ENCODE measurements at regions of chr4 and their contacts with region 1.

Region 1: DNA sequence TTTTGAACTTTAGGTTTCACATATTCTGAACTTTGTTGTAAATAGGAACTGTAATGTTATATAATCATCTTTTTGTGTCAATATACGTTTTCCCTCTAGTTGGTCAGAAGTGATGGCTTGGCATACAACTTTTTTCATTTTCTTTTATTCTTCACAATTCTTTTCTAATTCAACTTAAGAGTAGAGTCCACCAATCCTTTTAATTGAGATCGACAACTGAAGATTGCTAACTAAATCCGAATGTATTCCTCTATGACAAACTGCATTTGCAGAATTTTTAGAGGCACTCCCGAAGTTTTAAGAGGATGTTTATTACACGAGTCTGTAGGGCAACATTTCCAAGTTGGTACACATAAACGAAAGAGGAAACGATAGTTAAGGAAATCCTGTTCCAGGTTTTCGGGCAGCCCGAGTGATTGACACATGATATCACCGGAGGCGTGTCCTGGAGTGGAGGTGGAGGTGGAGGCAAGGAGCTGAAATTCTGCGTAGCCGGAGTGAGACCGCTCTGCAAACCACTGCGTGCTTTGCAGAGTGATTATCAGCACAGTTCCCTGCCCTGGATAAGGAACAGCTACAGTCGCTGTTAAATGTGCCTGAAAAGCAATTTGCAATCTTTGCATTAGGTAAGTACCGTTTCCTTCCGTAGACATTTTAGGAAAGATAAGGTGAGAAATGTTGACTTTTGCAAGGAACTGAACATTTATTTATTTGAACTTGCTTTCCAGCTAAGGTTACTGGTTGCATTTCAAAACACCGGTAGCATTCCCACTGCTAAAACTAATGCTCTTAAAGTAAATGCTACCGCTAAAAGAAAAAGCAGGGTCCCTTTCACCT is at the start of gene SPRY1:
- DNase-seq: peak; percentile 90
- ATAC-seq: peak; percentile 63
- H3K4me3 Mint-ChIP-seq: peak within 1 kb of the TSS; percentile 81
- H3K27ac Mint-ChIP-seq: peak within 1 kb of the TSS; percentile 90
- H3K4me1 Mint-ChIP-seq: peaks cover 24% of the 10 kb centered on the region
- H3K27me3 Mint-ChIP-seq: peaks cover 5% of the 10 kb centered on the region
- total RNA-seq, gene SPRY1: 51.2 to 52.0 TPM

Region 2: GRCh38 chr4:122922877-122923511 is 473.5 kb before region 1 on chr4:
- CTCF ChIA-PET with region 1: no interaction called
- POLR2A ChIA-PET with region 1: no interaction called
- intact Hi-C with region 1: loop called in 1 of 2 experiments (anchors 5 kb)
- DNase-seq: peak; percentile 93
- ATAC-seq: peak; percentile 98
- H3K4me3 Mint-ChIP-seq: no peak overlapping the region
- H3K27ac Mint-ChIP-seq: peak overlapping the region; percentile 87
- H3K4me1 Mint-ChIP-seq: peaks cover 9% of the 10 kb centered on the region
- H3K27me3 Mint-ChIP-seq: no peaks in the 10 kb centered on the region

Region 3: GRCh38 chr4:123250843-123251242 is 145.7 kb before region 1 on chr4:
- CTCF ChIA-PET with region 1: no interaction called
- POLR2A ChIA-PET with region 1: no interaction called
- intact Hi-C with region 1: no loop called
- DNase-seq: no peak
- ATAC-seq: no peak
- H3K4me3 Mint-ChIP-seq: no peak overlapping the region
- H3K27ac Mint-ChIP-seq: no peak overlapping the region
- H3K4me1 Mint-ChIP-seq: no peaks in the 10 kb centered on the region
- H3K27me3 Mint-ChIP-seq: no peaks in the 10 kb centered on the region

Region 4: DNA sequence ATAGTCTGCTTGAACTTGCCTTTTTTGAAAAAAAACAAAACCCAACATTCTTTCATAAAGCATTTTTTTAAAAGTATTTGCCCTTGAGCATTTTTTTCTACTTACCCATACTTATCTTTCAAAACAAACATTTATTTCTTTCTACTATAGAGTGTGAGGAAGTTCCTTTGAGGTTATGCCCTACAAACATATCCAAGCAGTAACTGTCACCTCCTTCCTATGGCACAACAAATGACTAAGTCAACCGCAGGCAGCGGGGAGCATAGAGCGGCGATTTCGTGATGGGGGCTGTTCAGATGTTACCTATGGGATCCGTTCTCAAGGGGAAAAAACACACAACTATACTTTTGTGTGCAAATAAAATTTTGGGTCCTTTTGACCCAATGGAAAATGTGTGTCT is 19.5 kb after region 1 on chr4:
- CTCF ChIA-PET with region 1: interaction called, 12 read pairs
- POLR2A ChIA-PET with region 1: interaction called, 10 read pairs
- intact Hi-C with region 1: loop called (anchors 1 to 2 kb)
- DNase-seq: peak; percentile 72
- ATAC-seq: peak; percentile 64
- H3K4me3 Mint-ChIP-seq: no peak overlapping the region
- H3K27ac Mint-ChIP-seq: peak overlapping the region; percentile 60
- H3K4me1 Mint-ChIP-seq: peaks cover 72% of the 10 kb centered on the region
- H3K27me3 Mint-ChIP-seq: peaks cover 2% of the 10 kb centered on the region

Region 5: GRCh38 chr4:123477711-123478209 is 81.2 kb after region 1 on chr4:
- CTCF ChIA-PET with region 1: no interaction called
- POLR2A ChIA-PET with region 1: interaction called, 6 read pairs
- intact Hi-C with region 1: loop called (anchors 2 to 5 kb)
- DNase-seq: peak; percentile 81
- ATAC-seq: peak; percentile 96
- H3K4me3 Mint-ChIP-seq: peak overlapping the region; percentile 33
- H3K27ac Mint-ChIP-seq: peak overlapping the region; percentile 53
- H3K4me1 Mint-ChIP-seq: peaks cover 37% of the 10 kb centered on the region
- H3K27me3 Mint-ChIP-seq: no peaks in the 10 kb centered on the region

Region 6: GRCh38 chr4:123671633-123672404 is 275.3 kb after region 1 on chr4:
- CTCF ChIA-PET with region 1: no interaction called
- POLR2A ChIA-PET with region 1: interaction called, 7 read pairs
- intact Hi-C with region 1: loop called (anchors 1 to 5 kb)
- DNase-seq: peak; percentile 60
- ATAC-seq: peak; percentile 79
- H3K4me3 Mint-ChIP-seq: no peak overlapping the region
- H3K27ac Mint-ChIP-seq: no peak overlapping the region
- H3K4me1 Mint-ChIP-seq: peaks cover 30% of the 10 kb centered on the region
- H3K27me3 Mint-ChIP-seq: peaks cover 51% of the 10 kb centered on the region

Region 7: GRCh38 chr4:123876671-123877101 is 480.2 kb after region 1 on chr4:
- CTCF ChIA-PET with region 1: no interaction called
- POLR2A ChIA-PET with region 1: no interaction called
- intact Hi-C with region 1: no loop called
- DNase-seq: no peak
- ATAC-seq: no peak
- H3K4me3 Mint-ChIP-seq: no peak overlapping the region
- H3K27ac Mint-ChIP-seq: no peak overlapping the region
- H3K4me1 Mint-ChIP-seq: no peaks in the 10 kb centered on the region
- H3K27me3 Mint-ChIP-seq: peaks cover 1% of the 10 kb centered on the region

Measured in activated CD4-positive, alpha-beta T cell treated with anti-CD3 and anti-CD28 coated beads for 36 hours (primary cell).